Mammary epithelial cell (primary cell): ENCODE measurements at regions of chr5 and their contacts with region 1.

Region 1: DNA sequence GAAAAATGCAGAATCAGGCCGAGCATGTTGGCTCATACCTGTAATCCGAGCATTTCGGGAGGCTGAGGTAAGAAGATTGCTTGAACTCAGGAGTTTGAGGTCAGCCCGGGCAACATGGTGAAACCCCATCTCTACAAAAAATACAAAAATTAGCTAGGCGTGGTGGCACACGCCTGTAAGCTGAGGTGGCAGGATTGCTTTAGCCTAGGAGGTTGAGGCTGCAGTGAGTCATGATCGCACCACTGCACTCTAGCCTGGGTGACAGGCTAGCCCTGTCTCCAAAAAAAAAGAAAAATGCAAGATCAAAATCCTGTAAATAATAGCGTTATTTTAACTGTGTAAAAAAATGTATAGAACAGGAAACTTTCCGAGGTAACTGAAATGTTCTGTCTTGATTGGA is 39.4 kb downstream of the RNF44 start:
- DNase-seq: peak; percentile 88
- H3K4me3 ChIP-seq: no peak overlapping the region
- H3K27ac ChIP-seq: peak overlapping the region; percentile 48
- H3K4me1 ChIP-seq: peaks cover 17% of the 10 kb centered on the region
- H3K27me3 ChIP-seq: no peaks in the 10 kb centered on the region
- CTCF ChIP-seq: no peak

Region 2: GRCh38 chr5:176436661-176437071 is 61.2 kb before region 1 on chr5:
- CTCF ChIA-PET with region 1: no interaction called
- dilution Hi-C with region 1: loop called (anchors 5 kb)
- in situ Hi-C with region 1: no loop called
- intact Hi-C with region 1: no loop called
- DNase-seq: peak; percentile 72
- H3K4me3 ChIP-seq: peak overlapping the region in 1 of 3 experiments; percentile 0
- H3K27ac ChIP-seq: no peak overlapping the region
- H3K4me1 ChIP-seq: peaks cover 10% of the 10 kb centered on the region
- H3K27me3 ChIP-seq: no peaks in the 10 kb centered on the region
- CTCF ChIP-seq: no peak